HepG2 (cell line): ENCODE measurements at regions of chr13 and their contacts with region 1.

Region 1: DNA sequence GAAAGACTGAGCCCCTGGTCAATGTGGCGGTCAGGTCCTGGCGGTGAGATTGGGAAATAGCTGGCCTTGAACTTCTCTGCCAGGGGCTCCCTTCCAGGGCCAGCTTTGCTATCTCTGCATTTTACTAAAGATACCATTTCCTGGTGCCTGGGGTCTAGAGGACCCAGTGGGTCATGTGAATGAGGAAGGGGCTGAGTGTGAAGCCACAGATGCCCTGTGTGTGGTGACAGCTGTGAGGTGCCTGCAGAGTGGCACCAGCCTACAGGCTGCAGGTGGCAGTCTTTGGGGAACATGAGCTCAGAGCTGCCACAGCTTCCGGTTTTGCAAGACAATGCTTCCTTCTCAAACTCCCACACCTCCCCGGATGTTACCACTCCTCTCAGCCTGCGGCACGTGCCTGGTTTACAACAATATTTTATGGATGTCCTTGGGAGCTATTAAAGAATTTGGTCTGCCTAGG is 5.2 kb upstream of the MLNR start:
- DNase-seq: peak; percentile 78
- ATAC-seq: peak; percentile 80
- H3K4me3 ChIP-seq: peak overlapping the region; percentile 23 to 34 (median 24); a peak in 3 of 6 replicates
- H3K27ac ChIP-seq: peak overlapping the region; percentile 62
- H3K4me1 ChIP-seq: peaks cover 32% of the 10 kb centered on the region
- H3K27me3 ChIP-seq: no peaks in the 10 kb centered on the region
- CTCF ChIP-seq: peak; percentile 68
- EP300 ChIP-seq: peak in 1 of 2 experiments; percentile 9; a peak in 1 of 4 replicates
- POLR2A ChIP-seq: peak; percentile 73 to 77
- RAD21 ChIP-seq: no peak

Region 2: GRCh38 chr13:49146950-49147355 is 68.0 kb before region 1 on chr13:
- CTCF ChIA-PET with region 1: no interaction called
- POLR2A ChIA-PET with region 1: no interaction called
- in situ Hi-C with region 1: no loop called
- intact Hi-C with region 1: no loop called
- DNase-seq: no peak
- ATAC-seq: no peak
- H3K4me3 ChIP-seq: no peak overlapping the region
- H3K27ac ChIP-seq: no peak overlapping the region
- H3K4me1 ChIP-seq: no peaks in the 10 kb centered on the region
- H3K27me3 ChIP-seq: no peaks in the 10 kb centered on the region
- CTCF ChIP-seq: no peak
- EP300 ChIP-seq: no peak
- POLR2A ChIP-seq: no peak
- RAD21 ChIP-seq: no peak

Region 3: DNA sequence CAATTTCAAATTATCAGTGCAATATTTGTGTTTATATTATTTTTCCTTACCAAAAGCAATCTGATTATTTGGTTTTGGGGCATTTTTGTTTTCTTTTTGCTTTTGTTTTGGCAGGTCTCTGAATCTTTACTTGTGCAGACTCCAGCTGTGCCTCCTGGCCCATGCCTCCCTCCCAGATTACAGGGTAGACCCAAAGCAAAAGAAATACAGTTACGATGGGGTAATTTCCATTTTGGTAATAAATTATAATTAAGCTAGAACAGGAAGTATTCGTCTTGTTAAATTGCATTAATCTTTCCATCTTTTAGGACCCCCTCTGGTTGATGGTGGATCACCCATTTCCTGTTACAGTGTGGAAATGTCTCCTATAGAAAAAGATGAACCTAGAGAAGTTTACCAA is 24.0 kb before region 1 on chr13:
- CTCF ChIA-PET with region 1: no interaction called
- POLR2A ChIA-PET with region 1: no interaction called
- in situ Hi-C with region 1: no loop called
- intact Hi-C with region 1: no loop called
- DNase-seq: no peak
- ATAC-seq: no peak
- H3K4me3 ChIP-seq: no peak overlapping the region
- H3K27ac ChIP-seq: no peak overlapping the region
- H3K4me1 ChIP-seq: no peaks in the 10 kb centered on the region
- H3K27me3 ChIP-seq: no peaks in the 10 kb centered on the region
- CTCF ChIP-seq: no peak
- EP300 ChIP-seq: no peak
- POLR2A ChIP-seq: no peak
- RAD21 ChIP-seq: no peak

Region 4: GRCh38 chr13:49225223-49226090 is 10.5 kb after region 1 on chr13:
- CTCF ChIA-PET with region 1: no interaction called
- POLR2A ChIA-PET with region 1: interaction called, 10 read pairs
- in situ Hi-C with region 1: no loop called
- intact Hi-C with region 1: no loop called
- DNase-seq: peak; percentile 29
- ATAC-seq: peak; percentile 65
- H3K4me3 ChIP-seq: no peak overlapping the region
- H3K27ac ChIP-seq: no peak overlapping the region
- H3K4me1 ChIP-seq: peaks cover 10% of the 10 kb centered on the region
- H3K27me3 ChIP-seq: no peaks in the 10 kb centered on the region; a peak in 1 of 5 replicates
- CTCF ChIP-seq: 0 out of 2 replicates have a peak, but pooled peaks have one; percentile 30
- EP300 ChIP-seq: no peak
- POLR2A ChIP-seq: no peak
- RAD21 ChIP-seq: no peak

Region 5: GRCh38 chr13:49247643-49248621 is 33.0 kb after region 1 on chr13 and contains the start of gene CDADC1:
- CTCF ChIA-PET with region 1: no interaction called
- POLR2A ChIA-PET with region 1: interaction called, 22 read pairs
- in situ Hi-C with region 1: no loop called
- intact Hi-C with region 1: no loop called
- DNase-seq: peak; percentile 91
- ATAC-seq: peak; percentile 95
- H3K4me3 ChIP-seq: peak within 1 kb of the TSS; percentile 85 to 99 (median 97)
- H3K27ac ChIP-seq: peak within 1 kb of the TSS; percentile 80
- H3K4me1 ChIP-seq: peaks cover 18% of the 10 kb centered on the region
- H3K27me3 ChIP-seq: no peaks in the 10 kb centered on the region; a peak in 1 of 5 replicates
- CTCF ChIP-seq: peak; percentile 57
- EP300 ChIP-seq: peak in 1 of 2 experiments; percentile 7; a peak in 1 of 4 replicates
- POLR2A ChIP-seq: peak; percentile 79 to 83
- RAD21 ChIP-seq: no peak
- total RNA-seq, gene CDADC1: 9.0 and 10.8 TPM in 2 replicates